Left cardiac atrium (tissue), 4 donors: ENCODE measurements at regions of chr2 and their contacts with region 1.

Region 1: DNA sequence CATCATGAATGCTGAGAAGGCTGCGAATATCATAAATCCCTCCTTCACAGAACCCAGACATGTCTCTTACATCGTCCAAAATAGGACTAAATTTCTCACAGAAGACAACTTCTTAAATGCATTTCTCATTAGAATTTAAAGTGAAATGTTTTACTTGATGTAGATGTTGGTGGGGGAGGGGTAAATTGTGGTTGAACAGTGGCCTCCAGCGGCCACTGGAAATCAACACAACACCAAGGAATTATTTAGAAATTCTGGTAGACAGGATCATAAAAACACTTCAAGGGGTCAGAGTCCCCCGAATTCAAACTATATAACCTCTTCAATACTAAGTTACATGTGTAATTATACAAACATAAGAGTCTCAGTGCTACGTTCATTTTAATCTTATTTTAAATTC is 135.9 kb downstream of the ABCA12 start:
- DNase-seq: no peak
- ATAC-seq: no peak

Region 2: GRCh38 chr2:213806125-213806726 is 1196.3 kb before region 1 on chr2:
- intact Hi-C with region 1: loop called in 1 of 2 experiments (anchors 5 kb)
- DNase-seq: no peak
- ATAC-seq: no peak

Region 3: GRCh38 chr2:213818436-213818835 is 1184.1 kb before region 1 on chr2:
- intact Hi-C with region 1: loop called in 1 of 2 experiments (anchors 5 kb)
- DNase-seq: no peak
- ATAC-seq: no peak